HepG2 (cell line): ENCODE measurements at regions of chr20 and their contacts with region 1.

Region 1: GRCh38 chr20:33489495-33490022 is 337 bp upstream of the CBFA2T2 start:
- DNase-seq: peak; percentile 97
- ATAC-seq: peak; percentile 95
- H3K4me3 ChIP-seq: peak overlapping the region; percentile 65 to 79 (median 71)
- H3K27ac ChIP-seq: peak overlapping the region; percentile 75
- H3K4me1 ChIP-seq: peaks cover 32% of the 10 kb centered on the region
- H3K27me3 ChIP-seq: peaks cover 0 to 5% of the 10 kb centered on the region in 2 experiments; a peak in 1 of 5 replicates
- CTCF ChIP-seq: peak; percentile 29; the same call in 1 of the 2 replicates
- EP300 ChIP-seq: no peak
- POLR2A ChIP-seq: peak; percentile 95 to 99
- RAD21 ChIP-seq: no peak; the same call in 1 of the 2 replicates

Region 2: GRCh38 chr20:33373735-33374605 is 115.6 kb before region 1 on chr20:
- CTCF ChIA-PET with region 1: no interaction called
- POLR2A ChIA-PET with region 1: interaction called, 11 read pairs
- in situ Hi-C with region 1: no loop called
- intact Hi-C with region 1: no loop called
- DNase-seq: peak; percentile 99
- ATAC-seq: peak; percentile 96
- H3K4me3 ChIP-seq: no peak overlapping the region; a peak in 1 of 6 replicates
- H3K27ac ChIP-seq: peak overlapping the region; percentile 70
- H3K4me1 ChIP-seq: peaks cover 38% of the 10 kb centered on the region
- H3K27me3 ChIP-seq: no peaks in the 10 kb centered on the region
- CTCF ChIP-seq: no peak
- EP300 ChIP-seq: peak; percentile 56 to 94
- POLR2A ChIP-seq: no peak
- RAD21 ChIP-seq: no peak; the same call in 1 of the 2 replicates

Region 3: DNA sequence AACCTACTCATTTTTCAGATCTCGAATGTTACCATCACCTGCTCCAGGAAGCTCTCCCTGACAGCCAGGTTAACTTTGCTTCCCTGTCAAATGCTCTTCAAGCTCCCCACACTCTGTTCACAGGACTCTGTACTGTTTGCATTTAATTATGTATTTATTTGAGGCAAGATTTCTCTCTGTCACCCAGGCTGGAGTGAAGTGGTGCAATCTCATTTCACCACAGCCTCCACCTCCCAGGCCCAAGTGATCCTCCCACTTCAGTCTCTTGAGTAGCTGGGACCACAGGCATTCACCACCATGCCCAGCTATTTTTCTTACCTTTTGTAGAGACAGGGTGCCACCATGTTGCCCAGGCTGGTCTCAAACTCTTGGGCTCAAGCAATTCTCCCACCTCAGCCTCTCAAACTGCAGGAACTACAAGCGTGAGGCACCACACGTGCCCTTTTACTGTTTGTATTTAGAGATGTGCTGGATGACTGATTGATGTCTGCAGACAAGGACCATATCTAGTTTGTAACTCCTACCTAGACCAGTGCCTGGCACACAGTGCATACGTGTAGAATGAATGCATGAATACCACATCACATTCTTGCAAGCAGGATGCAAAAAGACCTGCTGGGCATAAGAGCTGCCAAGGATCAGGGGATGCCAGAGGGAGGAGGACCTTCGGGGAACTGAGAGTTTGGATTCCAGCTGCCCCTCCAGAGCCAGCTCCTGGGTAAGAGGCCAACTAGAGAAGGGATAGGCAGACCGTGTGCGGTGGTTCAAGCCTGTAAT is 15.3 kb before region 1 on chr20:
- CTCF ChIA-PET with region 1: no interaction called
- POLR2A ChIA-PET with region 1: interaction called, 12 read pairs
- in situ Hi-C with region 1: no loop called
- intact Hi-C with region 1: no loop called
- DNase-seq: peak; percentile 71
- ATAC-seq: peak; percentile 78
- H3K4me3 ChIP-seq: no peak overlapping the region; a peak in 1 of 6 replicates
- H3K27ac ChIP-seq: no peak overlapping the region
- H3K4me1 ChIP-seq: peaks cover 57% of the 10 kb centered on the region
- H3K27me3 ChIP-seq: peaks cover 2 to 28% of the 10 kb centered on the region in 2 experiments
- CTCF ChIP-seq: no peak
- EP300 ChIP-seq: no peak
- POLR2A ChIP-seq: no peak
- RAD21 ChIP-seq: no peak

Region 4: GRCh38 chr20:33506576-33506975 is 17.0 kb after region 1 on chr20:
- CTCF ChIA-PET with region 1: no interaction called
- POLR2A ChIA-PET with region 1: interaction called, 10 read pairs
- in situ Hi-C with region 1: no loop called
- intact Hi-C with region 1: no loop called
- DNase-seq: no peak
- ATAC-seq: no peak
- H3K4me3 ChIP-seq: no peak overlapping the region
- H3K27ac ChIP-seq: no peak overlapping the region
- H3K4me1 ChIP-seq: peaks cover 15% of the 10 kb centered on the region
- H3K27me3 ChIP-seq: no peaks in the 10 kb centered on the region
- CTCF ChIP-seq: no peak
- EP300 ChIP-seq: no peak
- POLR2A ChIP-seq: no peak
- RAD21 ChIP-seq: no peak

Region 5: GRCh38 chr20:33554914-33555420 is 65.4 kb after region 1 on chr20:
- CTCF ChIA-PET with region 1: no interaction called
- POLR2A ChIA-PET with region 1: interaction called, 10 read pairs
- in situ Hi-C with region 1: no loop called
- intact Hi-C with region 1: no loop called
- DNase-seq: peak; percentile 98
- ATAC-seq: peak; percentile 96
- H3K4me3 ChIP-seq: peak overlapping the region in 1 of 3 experiments; percentile 15; a peak in 1 of 6 replicates
- H3K27ac ChIP-seq: peak overlapping the region; percentile 39
- H3K4me1 ChIP-seq: peaks cover 58% of the 10 kb centered on the region
- H3K27me3 ChIP-seq: no peaks in the 10 kb centered on the region
- CTCF ChIP-seq: no peak
- EP300 ChIP-seq: 0 out of 4 replicates have a peak, but pooled peaks of 1 of the 2 experiments have one; percentile 17
- POLR2A ChIP-seq: peak; percentile 36 to 62; a peak in 2 of 4 replicates
- RAD21 ChIP-seq: no peak

Region 6: DNA sequence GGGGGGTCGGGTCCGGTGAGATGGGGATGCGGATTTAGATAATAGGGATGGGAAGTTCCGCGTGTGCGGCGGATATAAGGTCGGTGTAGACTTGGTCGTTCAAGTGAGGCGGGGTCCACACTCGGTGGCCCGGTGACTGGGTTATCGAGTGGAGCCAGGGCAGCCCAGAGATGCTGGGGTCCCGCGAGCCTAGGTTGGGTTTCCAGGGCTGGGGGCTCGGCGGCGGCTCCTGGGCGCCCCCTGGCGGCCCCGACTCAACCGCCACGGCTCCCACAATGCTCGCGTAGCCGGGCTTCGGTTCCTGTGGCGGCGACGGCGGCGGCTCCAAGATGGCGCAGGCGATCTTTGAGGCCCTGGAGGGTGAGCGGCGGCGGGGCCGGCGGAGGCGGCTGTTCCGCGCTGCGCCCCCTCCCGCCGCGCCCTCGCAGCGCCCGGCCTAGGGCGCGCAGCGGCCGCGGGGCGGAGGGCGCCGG is 242.2 kb after region 1 on chr20 and contains the start of gene ZNF341:
- CTCF ChIA-PET with region 1: no interaction called
- POLR2A ChIA-PET with region 1: interaction called, 13 read pairs
- in situ Hi-C with region 1: no loop called
- intact Hi-C with region 1: no loop called
- DNase-seq: peak; percentile 90
- ATAC-seq: peak; percentile 76
- H3K4me3 ChIP-seq: peak within 1 kb of the TSS; percentile 60 to 81 (median 65)
- H3K27ac ChIP-seq: peak within 1 kb of the TSS; percentile 84
- H3K4me1 ChIP-seq: peaks cover 34% of the 10 kb centered on the region
- H3K27me3 ChIP-seq: no peaks in the 10 kb centered on the region
- CTCF ChIP-seq: peak; percentile 96
- EP300 ChIP-seq: peak in 1 of 2 experiments; percentile 80; a peak in 2 of 4 replicates
- POLR2A ChIP-seq: no peak
- RAD21 ChIP-seq: peak; percentile 99
- total RNA-seq, gene ZNF341: 0.97 and 1.1 TPM in 2 replicates

Region 7: DNA sequence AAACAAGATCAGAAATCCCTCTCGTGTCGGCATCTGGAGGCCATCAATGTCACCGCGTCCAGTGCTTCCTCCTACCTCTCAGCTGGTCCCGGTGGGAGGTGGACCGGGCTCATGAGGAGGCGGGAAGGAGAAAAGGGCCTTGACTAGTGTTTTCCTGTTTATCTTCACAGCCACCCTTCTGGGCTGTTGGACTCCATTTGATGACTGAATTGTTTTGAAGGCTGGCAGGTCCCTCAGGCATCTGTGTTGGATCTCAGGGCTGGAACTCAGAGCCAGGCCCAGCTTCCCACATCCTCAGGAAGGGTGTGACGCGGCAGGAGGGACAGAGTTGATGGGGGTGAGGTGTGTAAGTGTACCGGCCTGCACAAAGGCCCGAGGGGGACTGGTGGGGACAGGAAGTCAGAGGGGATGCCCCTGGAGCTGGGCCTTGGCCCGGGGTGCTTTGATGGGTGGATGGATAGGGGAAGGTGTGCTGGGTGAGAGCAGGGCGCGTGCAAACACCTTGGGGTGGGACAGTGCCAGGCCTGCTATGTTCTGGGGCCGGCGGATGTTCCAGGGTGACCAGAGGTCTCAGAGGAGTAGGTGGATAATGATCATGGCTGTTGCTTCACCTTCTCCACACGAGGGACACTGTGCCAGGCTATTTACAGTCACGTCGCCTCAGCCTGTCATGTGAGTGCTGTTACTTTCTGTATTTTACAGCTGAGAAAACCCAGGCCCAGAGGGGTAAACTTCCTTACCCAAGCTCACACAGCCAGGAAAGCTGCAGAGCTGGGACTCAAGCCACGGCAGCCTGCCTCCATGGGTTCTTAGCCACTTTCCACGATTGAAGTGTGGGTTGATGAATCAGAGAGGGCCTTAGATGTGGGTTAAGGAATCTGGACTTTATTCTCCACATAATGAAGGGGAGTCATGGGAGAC is 303.7 kb after region 1 on chr20:
- CTCF ChIA-PET with region 1: no interaction called
- POLR2A ChIA-PET with region 1: no interaction called
- in situ Hi-C with region 1: no loop called
- intact Hi-C with region 1: no loop called
- DNase-seq: peak; percentile 40
- ATAC-seq: peak; percentile 58
- H3K4me3 ChIP-seq: peak overlapping the region; percentile 2 to 59 (median 37)
- H3K27ac ChIP-seq: no peak overlapping the region
- H3K4me1 ChIP-seq: peaks cover 45% of the 10 kb centered on the region
- H3K27me3 ChIP-seq: 0 out of 5 replicates have a peak, but pooled peaks cover 0 to 5% of the 10 kb centered on the region in 2 experiments
- CTCF ChIP-seq: peak; percentile 26
- EP300 ChIP-seq: no peak
- POLR2A ChIP-seq: no peak
- RAD21 ChIP-seq: no peak